OCI-LY7 (cell line): ENCODE measurements at regions of chr3 and their contacts with region 1.

Region 1: DNA sequence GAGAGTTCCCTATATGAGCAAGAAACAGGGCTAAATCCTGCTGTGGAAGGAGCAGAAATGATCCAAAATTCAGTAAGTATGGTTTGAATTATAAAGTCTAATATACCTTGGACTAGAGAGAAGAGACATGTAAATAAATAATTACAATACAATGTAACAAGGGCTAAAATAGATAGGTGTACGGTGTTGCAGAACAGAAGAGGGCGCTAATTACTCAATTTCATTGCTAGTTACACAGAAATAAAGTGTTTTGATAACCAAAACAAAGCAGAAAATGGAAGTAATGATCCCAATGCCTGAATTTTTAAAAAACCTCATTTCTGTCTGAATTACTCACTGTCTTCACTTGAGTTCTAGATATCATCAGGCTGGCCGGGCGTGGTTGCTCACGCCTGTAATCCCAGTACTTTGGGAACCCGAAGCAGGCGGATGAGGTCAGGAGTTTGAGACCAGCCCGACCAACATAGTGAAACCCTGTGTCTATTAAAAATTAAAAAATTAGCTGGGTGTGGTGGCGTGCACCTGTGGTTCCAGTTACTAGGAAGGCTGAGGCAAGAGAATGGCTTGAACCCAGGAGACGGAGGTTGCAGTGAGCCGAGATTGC is 8.3 kb upstream of the PLCH1 start:
- DNase-seq: peak; percentile 51
- H3K4me3 ChIP-seq: no peak overlapping the region
- H3K27ac ChIP-seq: no peak overlapping the region
- H3K4me1 ChIP-seq: no peaks in the 10 kb centered on the region
- CTCF ChIP-seq: peak; percentile 84

Region 2: GRCh38 chr3:155870133-155870944 is 117.2 kb after region 1 on chr3 and contains the start of gene GMPS:
- CTCF ChIA-PET with region 1: no interaction called
- POLR2A ChIA-PET with region 1: no interaction called
- intact Hi-C with region 1: loop called (anchors 5 kb)
- DNase-seq: peak; percentile 95
- H3K4me3 ChIP-seq: peak within 1 kb of the TSS; percentile 88
- H3K27ac ChIP-seq: peak within 1 kb of the TSS; percentile 81
- H3K4me1 ChIP-seq: peaks cover 23% of the 10 kb centered on the region
- CTCF ChIP-seq: peak; percentile 37; the same call in 1 of the 2 replicates
- total RNA-seq, gene GMPS: 32.3 and 37.6 TPM in 2 replicates